PC-3 (cell line): ENCODE measurements at regions of chr14 and their contacts with region 1.

Region 1: GRCh38 chr14:61025251-61026223 is 44.5 kb downstream of the SLC38A6 start:
- DNase-seq: peak; percentile 96
- ATAC-seq: peak; percentile 89
- H3K4me3 ChIP-seq: peak overlapping the region; percentile 48
- H3K27ac ChIP-seq: peak overlapping the region; percentile 82
- H3K4me1 ChIP-seq: peaks cover 39% of the 10 kb centered on the region
- H3K27me3 ChIP-seq: no peaks in the 10 kb centered on the region
- CTCF ChIP-seq: peak; percentile 99

Region 2: GRCh38 chr14:60648934-60649874 is 376.3 kb before region 1 on chr14 and contains the start of gene SIX1:
- CTCF ChIA-PET with region 1: no interaction called
- POLR2A ChIA-PET with region 1: interaction called, 4 read pairs
- intact Hi-C with region 1: loop called (anchors 1 kb)
- DNase-seq: peak; percentile 97
- ATAC-seq: peak; percentile 78
- H3K4me3 ChIP-seq: peak within 1 kb of the TSS; percentile 75
- H3K27ac ChIP-seq: 0 out of 2 replicates have a peak within 1 kb of the TSS, but pooled peaks have one; percentile 6
- H3K4me1 ChIP-seq: peaks cover 21% of the 10 kb centered on the region
- H3K27me3 ChIP-seq: no peaks in the 10 kb centered on the region
- CTCF ChIP-seq: no peak
- total RNA-seq, gene SIX1: 16.5 and 18.2 TPM in 2 replicates

Region 3: GRCh38 chr14:60724137-60724619 is 301.4 kb before region 1 on chr14 and contains the start of gene SIX4:
- CTCF ChIA-PET with region 1: no interaction called
- POLR2A ChIA-PET with region 1: no interaction called
- intact Hi-C with region 1: loop called (anchors 1 kb)
- DNase-seq: peak; percentile 98
- ATAC-seq: peak; percentile 70
- H3K4me3 ChIP-seq: peak within 1 kb of the TSS; percentile 86
- H3K27ac ChIP-seq: peak within 1 kb of the TSS; percentile 38
- H3K4me1 ChIP-seq: peaks cover 20% of the 10 kb centered on the region
- H3K27me3 ChIP-seq: no peaks in the 10 kb centered on the region
- CTCF ChIP-seq: no peak
- total RNA-seq, gene SIX4: 29.2 and 33.2 TPM in 2 replicates

Region 4: GRCh38 chr14:60805841-60806569 is 219.5 kb before region 1 on chr14:
- CTCF ChIA-PET with region 1: no interaction called
- POLR2A ChIA-PET with region 1: interaction called, 4 read pairs
- intact Hi-C with region 1: loop called (anchors 1 kb)
- DNase-seq: peak; percentile 93
- ATAC-seq: peak; percentile 87
- H3K4me3 ChIP-seq: no peak overlapping the region
- H3K27ac ChIP-seq: peak overlapping the region; percentile 51
- H3K4me1 ChIP-seq: peaks cover 36% of the 10 kb centered on the region
- H3K27me3 ChIP-seq: no peaks in the 10 kb centered on the region
- CTCF ChIP-seq: no peak

Region 5: DNA sequence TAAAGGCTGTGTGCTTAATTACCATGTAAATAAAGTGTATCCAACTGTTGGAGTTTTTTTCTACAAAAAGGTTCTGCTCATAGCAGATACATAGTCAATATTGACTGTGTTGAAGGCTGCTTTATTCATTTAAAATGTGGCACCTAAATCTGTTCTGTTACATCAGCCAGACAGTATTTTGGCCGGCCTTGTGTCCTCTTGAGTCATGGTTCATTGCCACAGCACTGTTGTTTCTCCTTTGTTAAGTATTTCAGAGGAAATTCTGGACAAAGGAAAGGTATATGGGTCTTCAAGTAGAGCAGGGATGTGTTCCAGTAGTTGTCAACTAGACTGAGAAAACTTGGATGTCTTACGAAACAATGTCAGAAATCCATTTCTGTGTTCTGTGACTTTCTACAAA is 51.0 kb after region 1 on chr14:
- CTCF ChIA-PET with region 1: interaction called, 6 read pairs
- POLR2A ChIA-PET with region 1: interaction called, 8 read pairs
- intact Hi-C with region 1: loop called (anchors 1 kb)
- DNase-seq: no peak
- ATAC-seq: peak; percentile 4; the same call in 1 of the 2 replicates
- H3K4me3 ChIP-seq: no peak overlapping the region
- H3K27ac ChIP-seq: peak overlapping the region; percentile 82
- H3K4me1 ChIP-seq: peaks cover 33% of the 10 kb centered on the region
- H3K27me3 ChIP-seq: no peaks in the 10 kb centered on the region
- CTCF ChIP-seq: no peak

Region 6: DNA sequence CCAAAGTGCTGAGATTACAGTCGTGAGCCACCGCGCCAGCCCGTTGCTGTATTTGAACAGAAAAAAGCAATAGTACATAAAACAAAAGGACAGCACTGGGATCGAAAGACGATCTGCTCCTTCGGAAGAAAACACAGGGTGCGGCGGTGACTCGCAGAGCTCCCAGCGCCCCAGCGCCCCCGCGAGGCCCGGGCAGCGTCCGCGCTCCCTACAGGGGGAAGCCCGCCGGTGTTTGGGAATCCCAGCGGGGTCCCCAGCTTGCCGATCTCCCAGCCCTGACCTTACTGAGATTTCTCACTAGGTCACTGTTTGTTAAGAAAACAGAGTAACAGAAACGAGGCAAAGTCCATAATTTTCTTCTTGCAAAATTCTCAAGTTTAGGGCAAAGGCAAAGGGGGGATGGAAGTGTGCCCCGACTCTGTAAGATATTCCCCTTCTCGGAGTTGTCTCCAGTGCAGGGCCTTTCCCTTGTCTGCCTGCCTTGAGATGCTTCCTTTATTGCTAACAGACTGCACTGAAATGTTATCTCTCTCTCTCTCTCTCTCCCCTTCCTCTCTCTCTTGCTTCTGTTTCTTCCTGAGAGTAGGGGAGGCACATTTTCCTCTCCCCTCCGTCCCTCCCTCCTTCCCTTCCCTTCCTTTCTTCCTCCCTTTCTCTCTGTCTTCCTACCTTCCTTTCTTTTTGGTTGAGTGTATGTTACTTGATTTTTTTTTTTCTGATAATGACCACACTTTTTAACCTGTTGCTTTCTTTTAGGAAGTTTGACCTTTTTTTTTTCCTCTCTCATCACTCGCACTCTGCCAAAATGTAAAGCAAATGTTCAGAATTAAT is 163.7 kb after region 1 on chr14:
- CTCF ChIA-PET with region 1: interaction called, 3 read pairs
- POLR2A ChIA-PET with region 1: no interaction called
- intact Hi-C with region 1: loop called (anchors 1 kb)
- DNase-seq: peak; percentile 84
- ATAC-seq: peak; percentile 91
- H3K4me3 ChIP-seq: peak overlapping the region; percentile 65
- H3K27ac ChIP-seq: no peak overlapping the region
- H3K4me1 ChIP-seq: peaks cover 16% of the 10 kb centered on the region
- H3K27me3 ChIP-seq: no peaks in the 10 kb centered on the region
- CTCF ChIP-seq: peak; percentile 90